ENCODE measurements at regions of chr4 and their contacts with region 1.

Region 1: DNA sequence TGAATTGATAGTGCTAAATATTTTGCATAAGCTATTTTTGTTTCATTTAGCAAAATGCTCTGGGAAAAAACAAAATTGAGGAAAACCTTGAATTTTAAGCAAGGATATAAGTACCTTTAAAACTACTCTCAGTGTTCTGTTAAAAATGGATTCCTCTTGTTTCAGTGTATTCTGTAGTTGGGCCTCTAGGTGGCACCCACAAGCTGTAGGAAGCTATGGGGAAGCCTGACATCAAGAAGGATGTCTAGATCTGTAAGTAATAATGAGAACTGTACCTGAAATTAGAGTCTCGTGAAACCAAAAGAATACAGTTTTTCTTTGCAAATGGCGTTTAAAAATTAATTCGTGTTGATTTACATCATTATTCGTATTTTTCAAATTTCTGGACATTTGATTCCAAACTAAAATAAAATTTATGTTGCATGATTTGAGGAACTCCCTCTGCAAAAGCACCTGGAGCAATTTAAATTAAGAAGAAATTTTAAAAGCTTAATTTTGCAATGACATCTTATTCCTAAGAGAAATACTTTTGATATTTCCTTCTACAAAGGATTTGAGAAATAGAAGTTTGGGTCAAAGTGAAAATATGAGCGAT is 51.2 kb downstream of the TMPRSS11E start:
- DNase-seq: no peak
- ATAC-seq: peak; percentile 80
- H3K4me3 Mint-ChIP-seq: no peak overlapping the region
- H3K27ac Mint-ChIP-seq: no peak overlapping the region
- H3K4me1 Mint-ChIP-seq: peaks cover 9% of the 10 kb centered on the region
- H3K27me3 Mint-ChIP-seq: no peaks in the 10 kb centered on the region
- CTCF ChIP-seq: peak; percentile 51

Region 2: DNA sequence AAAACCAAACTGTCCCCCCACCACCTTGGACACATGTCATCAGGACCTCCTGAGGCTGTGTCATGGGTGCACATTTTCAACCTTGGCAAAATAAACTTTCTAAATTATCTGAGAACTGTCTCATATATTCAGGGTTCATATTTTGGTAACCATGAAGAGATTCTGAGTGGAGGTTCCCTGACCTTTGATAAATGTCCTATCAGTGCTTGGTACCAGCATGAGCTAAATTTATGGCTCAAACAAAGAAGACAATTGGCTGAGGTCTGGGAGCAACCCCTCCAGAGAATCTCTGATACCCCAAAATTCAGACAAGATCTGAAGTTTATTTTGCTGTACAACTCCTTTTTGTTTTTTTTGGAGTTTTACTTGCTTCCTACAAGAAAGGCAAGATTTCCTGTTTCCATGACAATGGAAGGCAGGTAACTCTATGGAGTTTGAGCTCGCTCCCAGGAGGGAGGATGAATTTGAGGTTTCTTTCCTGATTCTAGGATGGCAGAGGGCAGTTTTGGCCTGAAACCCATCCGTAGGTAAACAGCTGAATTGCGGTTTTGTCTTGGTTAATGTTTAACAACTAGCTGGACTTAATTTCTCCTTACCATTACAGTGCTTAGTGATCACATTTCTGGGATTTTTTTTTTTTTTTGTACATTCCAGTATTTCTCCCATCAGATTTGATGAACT is 157.4 kb after region 1 on chr4:
- CTCF ChIA-PET with region 1: no interaction called
- POLR2A ChIA-PET with region 1: no interaction called
- intact Hi-C with region 1: loop called (anchors 5 kb)
- DNase-seq: no peak
- ATAC-seq: no peak
- H3K4me3 Mint-ChIP-seq: no peak overlapping the region
- H3K27ac Mint-ChIP-seq: no peak overlapping the region
- H3K4me1 Mint-ChIP-seq: no peaks in the 10 kb centered on the region
- H3K27me3 Mint-ChIP-seq: no peaks in the 10 kb centered on the region
- CTCF ChIP-seq: no peak

Region 3: GRCh38 chr4:69038582-69038981 is 540.1 kb after region 1 on chr4:
- CTCF ChIA-PET with region 1: no interaction called
- POLR2A ChIA-PET with region 1: no interaction called
- intact Hi-C with region 1: loop called (anchors 10 kb)
- DNase-seq: no peak
- ATAC-seq: no peak
- H3K4me3 Mint-ChIP-seq: no peak overlapping the region
- H3K27ac Mint-ChIP-seq: no peak overlapping the region
- H3K4me1 Mint-ChIP-seq: no peaks in the 10 kb centered on the region
- H3K27me3 Mint-ChIP-seq: no peaks in the 10 kb centered on the region
- CTCF ChIP-seq: no peak